A549 (cell line): ENCODE measurements at regions of chr16 and their contacts with region 1.

Region 1: GRCh38 chr16:22321339-22322001 is 24.3 kb downstream of the POLR3E start:
- DNase-seq: peak; percentile 72 to 84
- ATAC-seq: peak; percentile 61 to 81; a peak in 5 of 6 replicates
- H3K4me3 ChIP-seq: no peak overlapping the region
- H3K27ac ChIP-seq: peak overlapping the region in 1 of 2 experiments; percentile 50; a peak in 3 of 6 replicates
- H3K4me1 ChIP-seq: no peaks in the 10 kb centered on the region
- CTCF ChIP-seq: peak; percentile 96
- EP300 ChIP-seq: no peak
- POLR2A ChIP-seq: no peak
- RAD21 ChIP-seq: peak; percentile 94 to 97

Region 2: GRCh38 chr16:21158208-21159110 is 1163.0 kb before region 1 on chr16 and contains the start of gene LDAF1:
- CTCF ChIA-PET with region 1: interaction called, 37 read pairs
- POLR2A ChIA-PET with region 1: no interaction called
- DNase-seq: peak; percentile 64 to 75
- ATAC-seq: peak; percentile 97 to 99
- H3K4me3 ChIP-seq: peak within 1 kb of the TSS; percentile 83
- H3K27ac ChIP-seq: peak within 1 kb of the TSS; percentile 84 to 95
- H3K4me1 ChIP-seq: peaks cover 25% of the 10 kb centered on the region; the same call in 2 of the 3 replicates
- CTCF ChIP-seq: no peak
- EP300 ChIP-seq: no peak
- POLR2A ChIP-seq: no peak; the same call in 1 of the 2 replicates
- RAD21 ChIP-seq: no peak; a peak in 1 of 5 replicates
- polyA plus RNA-seq, gene LDAF1: 14.4 and 16.2 TPM in 2 replicates

Region 3: GRCh38 chr16:22284637-22285036 is 36.8 kb before region 1 on chr16:
- CTCF ChIA-PET with region 1: no interaction called
- POLR2A ChIA-PET with region 1: no interaction called
- DNase-seq: no peak
- ATAC-seq: no peak
- H3K4me3 ChIP-seq: no peak overlapping the region
- H3K27ac ChIP-seq: no peak overlapping the region
- H3K4me1 ChIP-seq: no peaks in the 10 kb centered on the region
- CTCF ChIP-seq: no peak
- EP300 ChIP-seq: no peak
- POLR2A ChIP-seq: no peak
- RAD21 ChIP-seq: no peak

Region 4: GRCh38 chr16:22337849-22338635 is 16.6 kb after region 1 on chr16:
- CTCF ChIA-PET with region 1: interaction called, 14 read pairs
- POLR2A ChIA-PET with region 1: no interaction called
- DNase-seq: no peak
- ATAC-seq: no peak
- H3K4me3 ChIP-seq: no peak overlapping the region
- H3K27ac ChIP-seq: no peak overlapping the region
- H3K4me1 ChIP-seq: no peaks in the 10 kb centered on the region
- CTCF ChIP-seq: no peak
- EP300 ChIP-seq: no peak
- POLR2A ChIP-seq: no peak
- RAD21 ChIP-seq: no peak